A549 (cell line): ENCODE measurements at regions of chr14 and their contacts with region 1.

Region 1: DNA sequence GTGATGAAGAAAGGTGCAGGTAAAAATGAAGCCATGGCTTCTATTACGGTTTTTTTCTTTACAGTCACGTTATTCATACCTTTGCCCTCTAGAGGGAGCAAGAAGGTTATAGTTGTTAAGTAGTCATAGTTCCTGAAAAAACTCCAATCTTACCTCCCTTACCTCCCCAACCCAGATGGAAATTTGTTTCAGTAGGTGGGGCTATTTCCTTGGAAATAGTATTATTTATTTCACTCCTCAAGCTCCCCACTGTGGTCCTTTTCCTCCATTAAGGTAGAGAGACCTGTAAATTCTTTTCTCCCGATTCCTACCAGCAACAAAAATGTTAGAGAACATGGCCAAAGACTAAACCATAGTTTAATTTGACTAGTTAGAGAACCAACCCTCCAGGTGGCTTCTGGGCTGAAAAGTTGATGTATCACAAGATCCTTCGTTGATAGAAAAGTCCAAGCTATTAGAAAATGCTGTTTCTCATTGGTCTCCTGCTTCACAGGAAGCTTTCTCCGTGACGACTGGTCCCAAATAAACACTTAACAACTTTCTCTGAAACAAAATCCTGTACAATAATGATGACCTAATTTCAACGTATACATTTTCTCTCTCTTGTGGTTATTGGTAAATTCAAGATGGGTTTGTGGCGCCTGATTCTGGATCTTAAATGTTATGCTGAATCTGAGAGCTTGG is 43.5 kb downstream of the TMX1 start:
- DNase-seq: peak; percentile 78 to 81
- ATAC-seq: peak; percentile 86 to 93
- H3K4me3 ChIP-seq: no peak overlapping the region
- H3K27ac ChIP-seq: no peak overlapping the region
- H3K4me1 ChIP-seq: no peaks in the 10 kb centered on the region
- CTCF ChIP-seq: peak; percentile 96
- EP300 ChIP-seq: no peak
- POLR2A ChIP-seq: no peak
- RAD21 ChIP-seq: peak; percentile 94 to 97

Region 2: DNA sequence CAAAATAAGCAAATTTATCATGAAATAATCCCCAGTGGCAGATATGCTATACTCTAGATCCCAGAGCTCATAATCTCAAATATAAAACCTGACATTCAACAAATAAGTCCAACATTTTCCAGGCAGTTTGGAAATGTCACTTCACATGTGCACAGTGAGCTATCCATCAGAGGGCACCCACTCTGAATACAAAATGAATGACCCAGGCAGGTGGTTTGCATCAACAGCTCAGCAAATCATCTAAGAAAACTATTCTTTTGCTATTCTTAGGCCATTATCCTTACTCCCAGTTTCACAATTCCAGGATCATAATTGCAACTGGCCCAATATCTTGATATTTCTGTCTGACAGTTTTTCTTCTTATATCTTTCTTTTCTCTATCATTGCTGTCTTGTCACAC is 227.1 kb before region 1 on chr14:
- CTCF ChIA-PET with region 1: no interaction called
- POLR2A ChIA-PET with region 1: no interaction called
- DNase-seq: no peak
- ATAC-seq: no peak
- H3K4me3 ChIP-seq: no peak overlapping the region
- H3K27ac ChIP-seq: no peak overlapping the region
- H3K4me1 ChIP-seq: no peaks in the 10 kb centered on the region
- CTCF ChIP-seq: no peak
- EP300 ChIP-seq: no peak
- POLR2A ChIP-seq: no peak
- RAD21 ChIP-seq: no peak

Region 3: DNA sequence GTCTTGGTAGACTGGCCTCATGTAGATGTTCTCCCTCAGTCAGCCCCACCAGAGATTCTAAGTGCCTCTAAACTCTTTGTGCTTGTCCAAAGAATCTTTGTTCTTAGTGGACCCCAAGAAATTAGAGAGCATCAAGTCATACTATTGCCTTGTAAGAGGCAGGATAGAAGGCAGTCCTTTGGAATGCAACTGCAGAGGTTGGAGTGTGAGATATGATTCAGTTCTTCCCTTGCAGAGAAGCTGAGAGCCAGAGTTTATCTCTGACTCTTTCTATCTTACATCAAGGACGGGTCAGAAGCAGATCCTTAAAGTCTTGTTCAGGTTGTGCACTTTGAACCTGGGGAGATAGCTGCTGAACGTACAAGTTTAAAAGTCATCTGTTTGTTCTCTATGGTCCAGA is 22.4 kb before region 1 on chr14:
- CTCF ChIA-PET with region 1: interaction called, 31 read pairs
- POLR2A ChIA-PET with region 1: no interaction called
- DNase-seq: no peak
- ATAC-seq: no peak
- H3K4me3 ChIP-seq: no peak overlapping the region
- H3K27ac ChIP-seq: no peak overlapping the region
- H3K4me1 ChIP-seq: no peaks in the 10 kb centered on the region
- CTCF ChIP-seq: no peak
- EP300 ChIP-seq: no peak
- POLR2A ChIP-seq: no peak
- RAD21 ChIP-seq: no peak

Region 4: GRCh38 chr14:51304941-51305340 is 21.4 kb after region 1 on chr14:
- CTCF ChIA-PET with region 1: interaction called, 32 read pairs
- POLR2A ChIA-PET with region 1: no interaction called
- DNase-seq: peak; percentile 25 to 49
- ATAC-seq: peak; percentile 75 to 90
- H3K4me3 ChIP-seq: no peak overlapping the region
- H3K27ac ChIP-seq: peak overlapping the region; percentile 46 to 65; a peak in 3 of 6 replicates
- H3K4me1 ChIP-seq: peaks cover 14% of the 10 kb centered on the region
- CTCF ChIP-seq: no peak
- EP300 ChIP-seq: no peak
- POLR2A ChIP-seq: no peak
- RAD21 ChIP-seq: no peak

Region 5: DNA sequence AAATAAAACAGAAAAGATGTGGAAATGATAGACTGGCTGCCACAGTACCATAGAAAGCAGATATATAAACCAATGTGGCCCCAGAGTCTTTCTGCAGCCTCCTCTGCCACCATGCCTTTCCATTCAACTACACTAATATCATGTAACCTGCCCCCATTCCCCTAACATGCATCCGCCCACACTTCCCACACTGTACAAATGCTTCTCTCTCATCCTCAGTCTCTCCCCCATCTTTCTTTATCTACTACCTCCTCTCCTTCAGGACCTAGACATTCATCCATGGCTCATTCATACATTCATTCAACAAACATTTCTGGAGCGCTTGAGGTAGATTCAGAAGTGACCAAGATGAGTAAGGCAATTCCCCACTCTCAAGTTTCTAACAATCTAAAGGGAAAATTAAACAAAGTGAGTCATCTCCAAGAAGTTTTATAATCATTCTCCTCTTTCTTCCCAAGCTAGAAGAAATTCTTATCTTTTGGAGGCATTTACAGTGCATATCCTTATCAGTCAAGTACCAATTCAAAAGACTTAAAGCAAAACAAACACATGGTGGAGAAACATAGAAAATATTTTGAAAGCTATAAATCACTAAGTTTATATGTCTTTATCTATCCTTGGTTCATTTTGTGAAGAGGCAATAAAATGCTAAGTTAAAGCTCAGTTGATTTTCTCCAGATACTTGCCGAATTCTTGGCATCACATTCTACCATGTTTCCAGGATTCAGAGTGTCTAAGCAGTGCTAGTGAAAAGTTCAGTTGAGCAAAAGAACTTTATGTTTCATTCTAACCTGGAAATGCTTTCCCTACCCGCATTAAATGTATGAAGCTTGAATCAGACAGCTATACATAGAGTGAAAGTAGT is 297.7 kb after region 1 on chr14:
- CTCF ChIA-PET with region 1: interaction called, 14 read pairs
- POLR2A ChIA-PET with region 1: no interaction called
- DNase-seq: peak in 1 of 2 experiments; percentile 55
- ATAC-seq: peak; percentile 69 to 89; a peak in 5 of 6 replicates
- H3K4me3 ChIP-seq: no peak overlapping the region
- H3K27ac ChIP-seq: peak overlapping the region; percentile 6 to 47; a peak in 4 of 6 replicates
- H3K4me1 ChIP-seq: peaks cover 20% of the 10 kb centered on the region
- CTCF ChIP-seq: no peak
- EP300 ChIP-seq: no peak
- POLR2A ChIP-seq: no peak
- RAD21 ChIP-seq: no peak

Region 6: GRCh38 chr14:51666826-51667225 is 383.3 kb after region 1 on chr14:
- CTCF ChIA-PET with region 1: interaction called, 19 read pairs
- POLR2A ChIA-PET with region 1: no interaction called
- DNase-seq: no peak
- ATAC-seq: no peak
- H3K4me3 ChIP-seq: no peak overlapping the region
- H3K27ac ChIP-seq: no peak overlapping the region
- H3K4me1 ChIP-seq: no peaks in the 10 kb centered on the region
- CTCF ChIP-seq: no peak
- EP300 ChIP-seq: no peak
- POLR2A ChIP-seq: no peak
- RAD21 ChIP-seq: no peak

Region 7: GRCh38 chr14:51719955-51720354 is 436.4 kb after region 1 on chr14:
- CTCF ChIA-PET with region 1: interaction called, 11 read pairs
- POLR2A ChIA-PET with region 1: no interaction called
- DNase-seq: no peak
- ATAC-seq: no peak
- H3K4me3 ChIP-seq: no peak overlapping the region
- H3K27ac ChIP-seq: no peak overlapping the region
- H3K4me1 ChIP-seq: peaks cover 6% of the 10 kb centered on the region; the same call in 1 of the 3 replicates
- CTCF ChIP-seq: no peak
- EP300 ChIP-seq: no peak
- POLR2A ChIP-seq: no peak
- RAD21 ChIP-seq: no peak